OCI-LY7 (cell line): ENCODE measurements at regions of chr1 and their contacts with region 1.

Region 1: GRCh38 chr1:21200767-21201166 is 24.1 kb upstream of the EIF4G3 start:
- DNase-seq: no peak
- H3K4me3 ChIP-seq: no peak overlapping the region
- H3K27ac ChIP-seq: no peak overlapping the region
- H3K4me1 ChIP-seq: no peaks in the 10 kb centered on the region
- CTCF ChIP-seq: no peak

Region 2: DNA sequence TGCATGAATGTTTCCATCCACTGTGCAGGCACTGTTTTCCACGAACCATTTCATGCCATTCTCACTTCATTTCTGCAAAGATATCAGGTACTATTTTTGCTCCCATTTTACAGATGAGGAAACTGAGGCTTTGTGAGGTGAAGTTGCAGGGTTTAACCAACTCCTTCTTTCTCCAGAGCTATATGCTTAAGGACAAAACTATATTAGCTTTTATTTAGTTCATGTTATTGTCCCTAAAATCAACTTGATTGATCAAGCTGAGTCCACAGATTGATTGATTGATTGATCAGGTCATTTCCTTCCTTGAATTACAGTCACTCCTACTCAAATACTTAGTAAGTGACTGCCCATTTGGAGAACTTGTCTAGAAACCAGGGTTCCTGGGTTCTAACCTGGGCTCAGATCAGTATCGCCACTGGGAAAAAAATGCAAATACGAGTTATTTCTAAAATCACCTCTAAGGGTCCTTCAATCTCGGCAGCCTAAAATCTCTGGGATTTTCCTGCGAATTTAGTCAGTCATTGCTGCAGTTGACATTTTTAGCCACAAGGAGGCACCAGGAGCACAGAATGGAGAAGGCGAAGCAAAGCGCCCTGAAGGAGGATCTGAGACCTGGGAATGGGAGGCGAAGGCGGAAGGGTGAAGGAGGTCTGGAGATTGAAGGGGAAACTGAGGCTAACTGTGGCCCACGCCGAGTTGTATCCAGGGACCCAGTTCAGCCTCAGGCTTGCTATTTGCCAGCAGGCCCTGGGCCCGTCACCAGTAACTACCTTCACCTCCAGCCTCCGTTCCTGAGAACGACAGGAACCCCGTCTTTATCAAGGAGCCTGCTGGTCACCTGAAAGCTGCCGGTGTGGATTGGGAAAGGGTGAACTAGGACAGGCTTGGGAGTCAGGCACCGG is 678.6 kb before region 1 on chr1:
- CTCF ChIA-PET with region 1: no interaction called
- POLR2A ChIA-PET with region 1: no interaction called
- intact Hi-C with region 1: loop called (anchors 1 kb)
- DNase-seq: peak; percentile 69
- H3K4me3 ChIP-seq: no peak overlapping the region
- H3K27ac ChIP-seq: no peak overlapping the region
- H3K4me1 ChIP-seq: no peaks in the 10 kb centered on the region
- CTCF ChIP-seq: peak; percentile 95

Region 3: DNA sequence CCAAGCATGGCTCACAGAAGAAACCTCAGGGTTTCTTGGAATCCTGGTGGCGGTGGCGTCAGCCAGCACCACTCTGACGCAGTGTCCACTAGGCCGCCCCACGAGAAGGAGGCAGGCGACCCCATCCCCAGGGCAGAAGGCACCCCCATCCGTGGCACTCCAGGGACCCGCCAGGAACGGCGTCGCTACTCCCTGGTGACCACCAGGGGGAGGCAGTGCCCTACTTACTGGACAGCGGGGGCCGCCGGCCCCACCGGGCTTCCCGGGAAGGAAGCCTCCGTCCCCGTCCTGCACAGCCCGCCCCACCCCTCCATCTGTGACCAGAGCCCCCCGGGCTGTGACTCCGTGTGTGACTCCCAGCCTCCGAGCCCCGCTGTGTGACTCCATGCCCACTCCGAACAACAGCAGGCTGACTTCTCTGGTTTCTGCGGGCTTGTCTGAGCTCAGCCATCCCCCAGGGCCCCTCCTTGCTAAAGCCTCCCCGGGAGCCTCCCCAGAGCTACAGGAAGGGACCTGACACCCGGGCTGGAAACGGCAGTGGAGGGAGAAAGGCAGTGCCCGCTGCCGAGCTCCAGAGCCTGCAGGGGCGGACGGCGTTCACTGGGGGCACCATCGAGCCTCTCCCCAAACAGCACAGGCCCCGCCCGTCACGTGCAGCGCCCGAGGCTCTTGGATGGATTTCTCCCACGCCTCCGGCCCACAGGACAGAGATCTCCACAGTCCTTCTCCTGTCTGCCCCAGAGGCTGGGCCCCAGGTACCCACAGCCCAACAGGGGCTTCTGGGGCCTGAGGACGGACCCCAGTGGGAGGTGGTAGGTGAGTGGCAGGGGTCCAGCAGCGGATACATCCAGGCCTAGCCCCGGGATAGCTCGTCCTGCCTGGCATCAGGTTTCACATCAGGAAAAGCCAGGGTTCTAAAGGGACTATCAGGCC is 504.1 kb before region 1 on chr1:
- CTCF ChIA-PET with region 1: no interaction called
- POLR2A ChIA-PET with region 1: no interaction called
- intact Hi-C with region 1: loop called (anchors 1 kb)
- DNase-seq: peak; percentile 83
- H3K4me3 ChIP-seq: peak overlapping the region; percentile 76
- H3K27ac ChIP-seq: peak overlapping the region; percentile 25
- H3K4me1 ChIP-seq: no peaks in the 10 kb centered on the region
- CTCF ChIP-seq: peak; percentile 93

Region 4: DNA sequence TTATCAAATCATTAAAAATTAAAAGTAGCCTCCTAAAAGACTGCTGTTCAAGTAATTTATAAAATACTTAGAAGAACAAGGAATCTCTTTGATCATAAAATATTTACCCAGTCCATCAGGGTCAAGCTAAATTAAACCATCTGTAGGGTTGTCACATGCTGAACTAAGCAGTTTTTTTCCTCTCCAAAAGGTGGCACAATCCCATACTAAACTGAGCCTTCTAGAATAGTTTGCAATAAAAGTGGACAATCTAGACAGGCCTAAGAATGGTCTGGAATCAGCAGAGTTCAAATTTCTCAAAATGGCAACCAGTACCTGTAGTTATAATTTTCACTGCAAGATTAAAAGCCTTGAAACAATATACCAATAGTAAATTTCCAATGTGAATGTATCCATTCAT is 218.9 kb before region 1 on chr1:
- CTCF ChIA-PET with region 1: no interaction called
- POLR2A ChIA-PET with region 1: no interaction called
- intact Hi-C with region 1: loop called (anchors 2 kb)
- DNase-seq: peak; percentile 19
- H3K4me3 ChIP-seq: no peak overlapping the region
- H3K27ac ChIP-seq: no peak overlapping the region
- H3K4me1 ChIP-seq: no peaks in the 10 kb centered on the region
- CTCF ChIP-seq: peak; percentile 66

Region 5: DNA sequence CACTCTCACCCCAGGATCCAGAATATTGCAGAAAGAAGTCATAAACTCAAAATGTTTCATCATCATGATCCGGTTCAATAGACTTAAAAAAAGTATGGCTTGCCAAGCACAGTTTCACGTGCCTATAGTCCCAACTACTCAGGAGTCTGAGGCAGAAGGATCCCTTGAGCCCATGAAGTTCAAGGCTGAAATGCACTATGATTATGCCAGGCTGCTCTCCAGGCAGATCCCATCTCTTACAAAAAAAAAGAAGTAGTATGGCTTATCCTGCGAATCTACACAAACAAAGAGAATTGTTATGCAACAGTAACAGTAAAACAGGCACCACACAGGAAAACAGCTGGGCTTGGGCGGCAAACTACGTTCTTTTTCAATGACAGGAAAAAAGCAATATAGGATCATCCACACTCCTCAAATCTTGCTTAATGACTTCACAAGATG is 100.3 kb before region 1 on chr1:
- CTCF ChIA-PET with region 1: no interaction called
- POLR2A ChIA-PET with region 1: no interaction called
- intact Hi-C with region 1: no loop called
- DNase-seq: no peak
- H3K4me3 ChIP-seq: no peak overlapping the region
- H3K27ac ChIP-seq: no peak overlapping the region
- H3K4me1 ChIP-seq: no peaks in the 10 kb centered on the region
- CTCF ChIP-seq: no peak

Region 6: DNA sequence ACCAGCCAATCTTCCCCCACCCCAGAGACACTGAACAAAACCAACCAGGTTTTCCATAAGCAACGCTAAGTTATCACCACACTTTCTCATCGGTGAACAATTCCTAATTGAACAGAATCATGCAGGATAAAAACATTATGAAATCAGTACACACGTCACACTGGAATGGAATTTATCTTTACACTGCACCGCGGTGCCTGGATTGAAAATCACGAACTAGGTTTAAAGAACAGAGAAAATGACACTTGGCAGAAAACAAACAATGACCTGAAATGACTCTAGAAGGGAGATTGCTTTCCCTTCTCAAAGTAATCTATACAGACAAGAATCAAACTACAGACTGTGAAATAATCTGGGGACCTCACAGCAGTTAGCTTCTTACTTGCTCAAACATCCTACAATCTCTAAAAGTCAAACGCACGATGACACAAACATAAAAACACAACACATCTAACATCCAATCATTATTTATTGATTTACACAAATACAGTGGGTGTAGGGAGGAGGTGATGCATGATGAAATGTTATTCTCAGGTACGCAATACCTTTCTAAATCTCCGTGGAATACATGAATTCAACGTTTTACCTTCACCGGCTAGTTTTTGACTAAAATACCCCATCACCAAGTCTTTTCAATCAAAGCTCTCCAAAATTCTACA is 26.0 kb before region 1 on chr1:
- CTCF ChIA-PET with region 1: no interaction called
- POLR2A ChIA-PET with region 1: no interaction called
- intact Hi-C with region 1: no loop called
- DNase-seq: no peak
- H3K4me3 ChIP-seq: peak overlapping the region; percentile 98
- H3K27ac ChIP-seq: no peak overlapping the region
- H3K4me1 ChIP-seq: peaks cover 18% of the 10 kb centered on the region
- CTCF ChIP-seq: no peak

Region 7: GRCh38 chr1:21280011-21280471 is 79.3 kb after region 1 on chr1:
- CTCF ChIA-PET with region 1: no interaction called
- POLR2A ChIA-PET with region 1: no interaction called
- intact Hi-C with region 1: no loop called
- DNase-seq: no peak
- H3K4me3 ChIP-seq: no peak overlapping the region
- H3K27ac ChIP-seq: no peak overlapping the region
- H3K4me1 ChIP-seq: peaks cover 16% of the 10 kb centered on the region
- CTCF ChIP-seq: no peak

Region 8: DNA sequence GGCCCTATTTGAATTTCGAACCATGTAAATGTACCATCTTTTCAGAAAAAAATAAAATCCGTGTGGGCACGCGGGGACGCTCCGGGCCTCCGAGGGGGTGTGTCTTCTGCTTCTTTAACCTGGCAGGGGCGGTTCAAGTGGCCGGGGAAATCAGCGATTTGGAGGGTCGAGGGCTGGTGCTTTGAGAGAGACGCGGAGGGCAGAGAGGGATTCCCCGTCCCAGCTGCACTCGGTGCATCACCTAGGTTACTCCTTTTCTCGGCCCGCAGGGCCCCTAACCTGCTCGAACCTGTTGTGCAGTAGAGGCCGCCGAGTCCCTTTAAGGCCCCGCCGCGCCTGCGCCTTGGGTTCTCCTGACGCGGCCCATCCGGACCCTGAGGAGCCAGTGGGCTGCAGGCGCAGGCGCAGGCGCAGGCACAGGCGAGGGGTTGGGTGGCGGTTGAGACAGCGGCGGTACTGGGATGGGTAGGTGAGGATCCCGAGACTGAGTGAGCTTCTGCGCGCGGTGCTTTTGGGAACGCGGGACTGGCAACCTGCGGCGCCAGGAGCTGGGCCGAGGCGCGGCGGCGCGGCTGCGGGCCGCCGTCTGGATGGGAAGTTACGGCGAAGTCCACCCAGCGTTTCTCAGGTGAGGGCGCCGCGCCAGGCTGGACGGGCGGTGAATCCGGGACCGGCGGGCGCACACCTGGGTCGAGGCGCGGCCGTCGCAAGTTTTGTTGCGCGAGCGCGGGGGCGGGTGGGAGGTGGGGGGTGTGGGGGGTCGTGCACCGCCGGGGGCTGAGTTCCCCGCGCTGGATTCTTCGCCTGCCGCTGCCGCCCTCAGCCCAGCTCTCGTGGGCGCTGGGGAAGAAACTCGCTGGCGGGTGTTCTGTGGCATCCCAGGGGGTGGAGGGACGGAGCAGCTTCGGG is 239.2 kb after region 1 on chr1 and contains the start of gene NBPF3:
- CTCF ChIA-PET with region 1: no interaction called
- POLR2A ChIA-PET with region 1: no interaction called
- intact Hi-C with region 1: no loop called
- DNase-seq: no peak
- H3K4me3 ChIP-seq: no peak within 1 kb of the TSS
- H3K27ac ChIP-seq: no peak within 1 kb of the TSS
- H3K4me1 ChIP-seq: no peaks in the 10 kb centered on the region
- CTCF ChIP-seq: no peak
- total RNA-seq, gene NBPF3: not detected in 2 replicates